WTC11 (cell line): ENCODE measurements at regions of chr5 and their contacts with region 1.

Region 1: DNA sequence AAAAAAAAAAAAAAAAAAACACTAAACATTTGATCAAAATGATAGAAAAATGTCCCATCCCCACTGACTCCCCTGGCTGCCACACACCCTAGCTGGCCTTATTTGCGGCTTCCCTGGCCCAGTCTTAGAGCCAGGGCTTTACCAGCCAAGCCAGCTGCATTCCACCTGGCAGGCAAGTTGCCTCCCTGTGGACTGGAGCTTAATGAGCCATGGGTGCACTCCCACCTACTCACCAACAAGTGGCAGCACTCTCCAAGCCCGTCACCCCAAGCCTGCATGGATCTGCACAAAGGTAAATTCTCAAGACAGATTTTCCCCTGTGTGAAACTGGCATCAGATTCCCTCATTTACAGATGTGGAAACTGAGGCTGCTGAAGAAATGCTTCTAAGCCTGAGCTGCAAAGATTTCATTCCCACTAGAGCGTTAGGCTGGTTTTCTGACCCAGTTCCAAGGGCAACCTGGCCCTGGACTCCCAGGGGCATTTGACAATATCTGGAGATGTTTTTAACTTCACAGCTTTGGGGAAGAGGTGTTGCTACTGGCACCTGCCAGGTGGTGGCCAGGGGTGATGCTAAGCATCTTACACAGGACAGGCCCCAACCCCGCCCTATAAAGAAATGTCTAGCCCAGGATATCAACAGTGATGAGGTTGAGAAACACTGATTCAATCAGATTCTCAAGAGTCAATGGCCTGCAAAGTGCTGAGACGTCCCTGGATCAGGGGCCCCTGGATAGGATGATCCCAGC is 21.9 kb upstream of the VDAC1 start:
- DNase-seq: peak; percentile 74
- ATAC-seq: peak; percentile 99
- H3K4me3 Mint-ChIP-seq: no peak overlapping the region
- H3K27ac Mint-ChIP-seq: no peak overlapping the region; the same call in 1 of the 2 replicates
- H3K4me1 Mint-ChIP-seq: 0 out of 2 replicates have a peak, but pooled peaks cover 9% of the 10 kb centered on the region
- H3K27me3 Mint-ChIP-seq: peaks cover 4% of the 10 kb centered on the region; the same call in 1 of the 2 replicates
- CTCF ChIP-seq: peak; percentile 41; the same call in 1 of the 2 replicates

Region 2: GRCh38 chr5:133996683-133997252 is 29.9 kb before region 1 on chr5:
- CTCF ChIA-PET with region 1: interaction called, 41 read pairs
- POLR2A ChIA-PET with region 1: no interaction called
- DNase-seq: peak; percentile 57
- ATAC-seq: peak; percentile 84
- H3K4me3 Mint-ChIP-seq: no peak overlapping the region
- H3K27ac Mint-ChIP-seq: peak overlapping the region; percentile 15; the same call in 1 of the 2 replicates
- H3K4me1 Mint-ChIP-seq: peaks cover 54% of the 10 kb centered on the region
- H3K27me3 Mint-ChIP-seq: no peaks in the 10 kb centered on the region
- CTCF ChIP-seq: peak; percentile 43; the same call in 1 of the 2 replicates

Region 3: GRCh38 chr5:134004592-134005375 is 21.9 kb before region 1 on chr5 and contains the start of gene VDAC1:
- CTCF ChIA-PET with region 1: interaction called, 17 read pairs
- POLR2A ChIA-PET with region 1: no interaction called
- DNase-seq: peak; percentile 74
- ATAC-seq: peak; percentile 76
- H3K4me3 Mint-ChIP-seq: peak within 1 kb of the TSS; percentile 90
- H3K27ac Mint-ChIP-seq: peak within 1 kb of the TSS; percentile 94
- H3K4me1 Mint-ChIP-seq: peaks cover 56% of the 10 kb centered on the region
- H3K27me3 Mint-ChIP-seq: no peaks in the 10 kb centered on the region
- CTCF ChIP-seq: no peak
- total RNA-seq, gene VDAC1: 266 to 274 TPM (median 268 TPM) in 3 replicates

Region 4: GRCh38 chr5:134053840-134054338 is 27.2 kb after region 1 on chr5:
- CTCF ChIA-PET with region 1: interaction called, 12 read pairs
- POLR2A ChIA-PET with region 1: no interaction called
- DNase-seq: no peak
- ATAC-seq: peak; percentile 28; the same call in 1 of the 2 replicates
- H3K4me3 Mint-ChIP-seq: no peak overlapping the region
- H3K27ac Mint-ChIP-seq: peak overlapping the region; percentile 32
- H3K4me1 Mint-ChIP-seq: peaks cover 46% of the 10 kb centered on the region
- H3K27me3 Mint-ChIP-seq: peaks cover 14% of the 10 kb centered on the region
- CTCF ChIP-seq: no peak

Region 5: DNA sequence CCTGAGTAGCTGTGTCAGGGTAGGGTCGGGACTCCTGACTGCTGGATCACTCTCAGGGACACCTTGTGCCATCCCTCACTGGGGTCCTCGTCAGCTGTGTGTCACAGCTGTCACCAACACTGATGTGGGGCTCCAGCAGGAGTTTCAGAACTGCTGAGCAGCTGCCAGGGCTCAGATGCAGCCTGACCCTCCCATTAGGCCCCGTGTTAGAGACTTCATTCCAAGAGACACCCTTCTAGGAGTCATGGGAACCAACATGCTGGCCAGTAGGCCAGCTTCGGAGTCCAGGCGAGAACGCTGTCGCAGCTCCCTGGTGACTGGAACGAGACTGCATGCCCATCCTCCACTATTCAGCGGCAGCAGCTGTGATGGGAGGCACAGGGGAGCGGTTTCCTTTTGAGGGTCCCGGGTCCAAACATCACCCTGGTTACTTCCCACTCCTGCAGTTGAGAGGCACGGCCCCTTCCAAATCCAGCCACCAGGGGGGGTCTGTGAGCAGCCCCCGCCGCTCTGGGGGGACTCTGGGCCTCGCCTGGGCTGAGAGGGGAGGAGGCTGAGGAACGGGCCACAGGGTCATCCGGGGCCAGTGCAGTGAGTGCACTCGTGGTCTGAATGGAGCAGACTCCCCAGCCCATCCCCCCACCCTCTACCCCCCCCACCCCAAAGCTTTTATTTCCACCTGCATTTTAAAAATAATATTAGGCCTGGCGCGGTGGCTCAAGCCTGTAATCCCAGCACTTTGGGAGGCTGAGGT is 75.2 kb after region 1 on chr5:
- CTCF ChIA-PET with region 1: interaction called, 30 read pairs
- POLR2A ChIA-PET with region 1: no interaction called
- DNase-seq: peak; percentile 87
- ATAC-seq: peak; percentile 73
- H3K4me3 Mint-ChIP-seq: no peak overlapping the region; the same call in 1 of the 2 replicates
- H3K27ac Mint-ChIP-seq: no peak overlapping the region
- H3K4me1 Mint-ChIP-seq: peaks cover 48% of the 10 kb centered on the region
- H3K27me3 Mint-ChIP-seq: peaks cover 52% of the 10 kb centered on the region
- CTCF ChIP-seq: peak; percentile 85

Region 6: GRCh38 chr5:134113902-134114875 is 87.5 kb after region 1 on chr5 and contains the start of gene TCF7:
- CTCF ChIA-PET with region 1: interaction called, 10 read pairs
- POLR2A ChIA-PET with region 1: no interaction called
- DNase-seq: peak; percentile 75
- ATAC-seq: peak; percentile 84
- H3K4me3 Mint-ChIP-seq: peak within 1 kb of the TSS; percentile 79
- H3K27ac Mint-ChIP-seq: peak within 1 kb of the TSS; percentile 80; the same call in 1 of the 2 replicates
- H3K4me1 Mint-ChIP-seq: peaks cover 11% of the 10 kb centered on the region
- H3K27me3 Mint-ChIP-seq: peaks cover 40% of the 10 kb centered on the region
- CTCF ChIP-seq: no peak
- total RNA-seq, gene TCF7: 8.9 to 11.3 TPM (median 9.6 TPM) in 3 replicates

Region 7: GRCh38 chr5:134493461-134494055 is 466.9 kb after region 1 on chr5:
- CTCF ChIA-PET with region 1: no interaction called
- POLR2A ChIA-PET with region 1: no interaction called
- DNase-seq: no peak
- ATAC-seq: no peak
- H3K4me3 Mint-ChIP-seq: no peak overlapping the region
- H3K27ac Mint-ChIP-seq: no peak overlapping the region
- H3K4me1 Mint-ChIP-seq: no peaks in the 10 kb centered on the region
- H3K27me3 Mint-ChIP-seq: no peaks in the 10 kb centered on the region
- CTCF ChIP-seq: no peak